GM12878 (cell line): ENCODE measurements at regions of chr9 and their contacts with region 1.

Region 1: DNA sequence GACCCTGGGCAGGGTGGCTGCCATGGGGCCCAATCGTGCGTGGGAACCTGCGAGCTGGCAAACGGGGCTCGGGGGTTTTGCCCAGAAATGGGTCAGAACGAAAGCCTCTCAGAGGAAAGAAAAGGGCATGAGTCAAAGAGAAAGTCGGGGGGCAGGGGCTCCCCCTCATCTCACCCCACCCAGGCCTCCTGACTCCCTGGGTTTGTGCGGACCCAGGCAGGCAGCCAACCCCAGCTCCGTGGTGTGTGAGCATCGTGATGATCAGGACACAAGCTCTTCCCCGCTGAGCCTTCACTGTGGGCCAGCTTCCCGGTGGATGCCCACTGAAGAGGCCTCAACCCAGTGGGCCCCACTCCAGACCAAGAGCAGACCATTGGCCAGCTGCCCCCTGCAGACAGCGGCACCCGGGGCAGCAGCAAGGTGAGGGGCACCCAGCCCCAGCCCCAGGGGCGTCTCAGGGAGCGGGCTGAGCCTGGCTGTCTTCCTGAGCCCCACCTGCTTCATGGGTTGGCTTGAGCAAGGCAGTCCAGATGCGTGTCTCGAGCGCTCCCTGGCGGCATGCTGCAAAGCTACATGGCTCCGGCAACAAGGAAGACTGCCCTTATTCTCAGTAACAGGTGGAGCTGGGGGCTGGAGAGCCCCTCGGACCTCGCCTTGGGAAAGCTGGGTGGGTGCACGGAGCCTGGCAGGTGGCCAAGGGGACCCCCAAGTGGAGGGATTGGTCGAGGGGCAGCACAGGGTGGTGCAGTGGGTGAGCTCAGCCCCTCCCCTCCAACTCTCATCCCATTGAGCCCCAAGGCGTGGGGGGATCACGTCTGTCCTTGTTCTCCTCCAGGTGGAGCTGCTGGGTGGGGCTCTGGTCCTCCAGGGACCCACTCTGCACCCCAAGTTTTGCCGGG is 3.2 kb upstream of the FUT7 start:
- DNase-seq: peak; percentile 55
- ATAC-seq: peak; percentile 89
- H3K4me3 ChIP-seq: peak overlapping the region; percentile 36; the same call in 1 of the 2 replicates
- H3K27ac ChIP-seq: no peak overlapping the region; the same call in 1 of the 2 replicates
- H3K4me1 ChIP-seq: peaks cover 34% of the 10 kb centered on the region
- H3K27me3 ChIP-seq: no peaks in the 10 kb centered on the region
- CTCF ChIP-seq: peak; percentile 90 to 97 (median 97)
- EP300 ChIP-seq: no peak; a peak in 1 of 4 replicates
- POLR2A ChIP-seq: no peak
- RAD21 ChIP-seq: peak; percentile 95

Region 2: GRCh38 chr9:136784249-136784996 is 250.7 kb before region 1 on chr9:
- CTCF ChIA-PET with region 1: interaction called, 61 read pairs
- POLR2A ChIA-PET with region 1: interaction called, 3 read pairs
- RAD21 ChIA-PET with region 1: interaction called, 28 read pairs
- SMC1A ChIA-PET with region 1: interaction called, 20 read pairs
- in situ Hi-C with region 1: no loop called
- intact Hi-C with region 1: loop called (anchors 1 kb)
- DNase-seq: no peak
- ATAC-seq: peak; percentile 65
- H3K4me3 ChIP-seq: no peak overlapping the region
- H3K27ac ChIP-seq: no peak overlapping the region
- H3K4me1 ChIP-seq: peaks cover 3% of the 10 kb centered on the region
- H3K27me3 ChIP-seq: peaks cover 0 to 1% of the 10 kb centered on the region in 2 experiments; a peak in 1 of 4 replicates
- CTCF ChIP-seq: peak; percentile 22 to 32 (median 27); a peak in 3 of 6 replicates
- EP300 ChIP-seq: no peak
- POLR2A ChIP-seq: no peak
- RAD21 ChIP-seq: 0 out of 2 replicates have a peak, but pooled peaks have one; percentile 8

Region 3: GRCh38 chr9:136807281-136808074 is 227.6 kb before region 1 on chr9 and contains the start of gene RABL6:
- CTCF ChIA-PET with region 1: interaction called, 15 read pairs
- POLR2A ChIA-PET with region 1: no interaction called
- RAD21 ChIA-PET with region 1: interaction called, 4 read pairs
- SMC1A ChIA-PET with region 1: interaction called, 5 read pairs
- in situ Hi-C with region 1: no loop called
- intact Hi-C with region 1: no loop called
- DNase-seq: no peak
- ATAC-seq: peak; percentile 87
- H3K4me3 ChIP-seq: peak within 1 kb of the TSS; percentile 90
- H3K27ac ChIP-seq: peak within 1 kb of the TSS; percentile 80
- H3K4me1 ChIP-seq: peaks cover 7% of the 10 kb centered on the region
- H3K27me3 ChIP-seq: no peaks in the 10 kb centered on the region
- CTCF ChIP-seq: no peak
- EP300 ChIP-seq: no peak
- POLR2A ChIP-seq: peak; percentile 78
- RAD21 ChIP-seq: no peak
- polyA plus RNA-seq, gene RABL6: 1.4 to 5.4 TPM

Region 4: GRCh38 chr9:136885950-136886578 is 149.0 kb before region 1 on chr9 and contains the start of gene TRAF2:
- CTCF ChIA-PET with region 1: interaction called, 11 read pairs
- POLR2A ChIA-PET with region 1: no interaction called
- RAD21 ChIA-PET with region 1: interaction called, 4 read pairs
- SMC1A ChIA-PET with region 1: no interaction called
- in situ Hi-C with region 1: no loop called
- intact Hi-C with region 1: no loop called
- DNase-seq: peak; percentile 98
- ATAC-seq: peak; percentile 92
- H3K4me3 ChIP-seq: peak within 1 kb of the TSS; percentile 100
- H3K27ac ChIP-seq: peak within 1 kb of the TSS; percentile 98
- H3K4me1 ChIP-seq: peaks cover 33% of the 10 kb centered on the region
- H3K27me3 ChIP-seq: no peaks in the 10 kb centered on the region
- CTCF ChIP-seq: 0 out of 6 replicates have a peak, but pooled peaks of 1 of the 3 experiments have one; percentile 3
- EP300 ChIP-seq: no peak
- POLR2A ChIP-seq: peak; percentile 90
- RAD21 ChIP-seq: no peak
- polyA plus RNA-seq, gene TRAF2: 0.34 to 1.1 TPM

Region 5: GRCh38 chr9:136975644-136976043 is 59.5 kb before region 1 on chr9:
- CTCF ChIA-PET with region 1: interaction called, 11 read pairs
- POLR2A ChIA-PET with region 1: no interaction called
- RAD21 ChIA-PET with region 1: interaction called, 7 read pairs
- SMC1A ChIA-PET with region 1: no interaction called
- in situ Hi-C with region 1: no loop called
- intact Hi-C with region 1: no loop called
- DNase-seq: no peak
- ATAC-seq: peak; percentile 25
- H3K4me3 ChIP-seq: no peak overlapping the region
- H3K27ac ChIP-seq: no peak overlapping the region
- H3K4me1 ChIP-seq: no peaks in the 10 kb centered on the region
- H3K27me3 ChIP-seq: no peaks in the 10 kb centered on the region; a peak in 2 of 4 replicates
- CTCF ChIP-seq: peak in 2 of 3 experiments; percentile 7 to 17; a peak in 1 of 6 replicates
- EP300 ChIP-seq: no peak
- POLR2A ChIP-seq: no peak
- RAD21 ChIP-seq: 0 out of 2 replicates have a peak, but pooled peaks have one; percentile 26

Region 6: DNA sequence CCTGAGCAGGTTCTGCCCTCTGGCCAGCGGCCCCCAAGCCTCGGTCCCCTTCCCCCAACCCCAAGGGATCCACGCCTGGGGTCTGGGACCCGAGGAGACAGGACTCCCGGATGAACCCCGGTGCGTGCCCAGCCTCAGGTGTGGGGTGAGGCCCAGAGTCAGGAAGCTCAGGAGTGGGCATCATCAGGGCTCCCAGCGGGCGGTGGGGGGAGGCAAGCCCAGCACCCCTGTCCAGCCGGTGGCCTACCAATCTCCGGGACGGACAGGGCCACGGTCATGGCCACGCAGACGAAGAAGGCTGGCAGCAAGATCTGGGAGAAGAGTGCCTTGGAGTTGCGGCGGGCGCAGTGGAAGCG is 21.5 kb before region 1 on chr9:
- CTCF ChIA-PET with region 1: no interaction called
- POLR2A ChIA-PET with region 1: no interaction called
- RAD21 ChIA-PET with region 1: no interaction called
- SMC1A ChIA-PET with region 1: no interaction called
- in situ Hi-C with region 1: no loop called
- intact Hi-C with region 1: no loop called
- DNase-seq: no peak
- ATAC-seq: no peak
- H3K4me3 ChIP-seq: no peak overlapping the region
- H3K27ac ChIP-seq: no peak overlapping the region
- H3K4me1 ChIP-seq: no peaks in the 10 kb centered on the region
- H3K27me3 ChIP-seq: no peaks in the 10 kb centered on the region
- CTCF ChIP-seq: no peak
- EP300 ChIP-seq: no peak
- POLR2A ChIP-seq: no peak
- RAD21 ChIP-seq: no peak

Region 7: DNA sequence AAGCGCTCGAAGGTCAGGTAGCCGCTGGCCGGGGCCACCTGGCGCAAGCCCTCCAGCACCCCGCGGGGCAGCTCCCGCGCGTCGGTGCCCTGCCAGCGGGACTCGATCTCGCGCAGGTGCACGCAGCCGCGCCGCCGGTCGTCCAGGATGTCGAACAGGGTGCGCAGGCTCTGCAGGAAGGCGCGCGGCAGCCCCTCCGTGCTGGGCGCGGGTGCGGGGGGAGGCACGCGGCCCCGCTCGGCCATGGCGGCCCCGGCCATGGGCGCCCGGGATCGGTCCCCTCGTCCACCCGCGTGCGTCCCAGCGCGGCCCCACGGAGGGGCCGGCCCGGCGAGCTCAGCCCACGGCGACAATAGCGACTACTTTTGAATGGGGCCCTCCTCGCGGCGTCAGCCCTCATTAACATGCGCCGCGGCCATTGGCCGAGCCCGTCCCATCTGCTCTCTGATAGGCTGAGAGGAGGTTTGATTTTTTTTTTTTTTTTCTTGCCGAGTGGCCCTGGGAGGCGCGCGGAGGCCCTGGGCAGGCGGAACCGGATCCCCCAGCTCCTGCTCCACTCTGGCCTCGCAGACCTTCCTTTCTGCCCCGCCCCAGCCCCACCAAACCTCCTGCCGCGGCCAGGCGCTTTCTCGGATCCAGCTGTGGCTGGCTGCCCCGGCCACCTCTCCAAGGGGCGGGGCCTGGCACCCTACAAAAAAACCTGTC is 35.2 kb after region 1 on chr9 and contains the start of gene SAPCD2:
- CTCF ChIA-PET with region 1: interaction called, 46 read pairs
- POLR2A ChIA-PET with region 1: interaction called, 5 read pairs
- RAD21 ChIA-PET with region 1: interaction called, 15 read pairs
- SMC1A ChIA-PET with region 1: interaction called, 12 read pairs
- in situ Hi-C with region 1: no loop called
- intact Hi-C with region 1: no loop called
- DNase-seq: no peak
- ATAC-seq: peak; percentile 88
- H3K4me3 ChIP-seq: peak within 1 kb of the TSS; percentile 80
- H3K27ac ChIP-seq: peak within 1 kb of the TSS; percentile 70
- H3K4me1 ChIP-seq: peaks cover 33% of the 10 kb centered on the region
- H3K27me3 ChIP-seq: no peaks in the 10 kb centered on the region
- CTCF ChIP-seq: no peak
- EP300 ChIP-seq: no peak
- POLR2A ChIP-seq: peak; percentile 69
- RAD21 ChIP-seq: no peak
- polyA plus RNA-seq, gene SAPCD2: 1.6 to 2.0 TPM

Region 8: DNA sequence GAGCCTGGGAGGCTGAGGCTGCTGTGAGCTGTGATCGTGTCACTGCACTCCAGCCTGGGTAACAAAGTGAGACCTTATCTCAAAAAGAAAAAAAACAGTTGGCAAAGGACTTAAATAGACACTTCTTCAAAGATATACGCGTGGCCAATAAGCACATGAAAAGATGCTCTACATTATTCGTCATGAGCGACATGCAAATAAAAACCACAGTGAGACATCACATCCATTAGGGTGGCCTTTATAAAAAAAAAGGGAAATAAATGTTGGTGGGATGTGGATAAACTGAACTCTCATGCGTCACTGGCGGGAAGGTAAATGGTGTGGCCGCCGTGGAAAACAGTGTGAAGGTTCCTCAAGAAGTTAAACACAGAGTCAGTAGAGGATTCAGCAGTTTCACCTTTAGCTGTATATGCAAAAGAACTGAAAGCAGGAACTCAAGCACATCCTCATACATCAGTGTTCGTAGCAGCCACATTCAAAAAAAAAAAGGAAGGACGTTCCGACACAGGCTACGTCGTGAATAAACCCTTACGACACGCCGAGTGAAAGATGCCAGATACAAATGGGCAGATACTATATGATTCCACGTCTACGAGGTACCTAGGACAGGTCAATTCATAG is 291.4 kb after region 1 on chr9:
- CTCF ChIA-PET with region 1: no interaction called
- POLR2A ChIA-PET with region 1: no interaction called
- RAD21 ChIA-PET with region 1: no interaction called
- SMC1A ChIA-PET with region 1: no interaction called
- in situ Hi-C with region 1: no loop called
- intact Hi-C with region 1: no loop called
- DNase-seq: peak; percentile 51
- ATAC-seq: peak; percentile 66
- H3K4me3 ChIP-seq: no peak overlapping the region
- H3K27ac ChIP-seq: no peak overlapping the region
- H3K4me1 ChIP-seq: peaks cover 6% of the 10 kb centered on the region; the same call in 1 of the 2 replicates
- H3K27me3 ChIP-seq: no peaks in the 10 kb centered on the region
- CTCF ChIP-seq: no peak
- EP300 ChIP-seq: no peak
- POLR2A ChIP-seq: no peak
- RAD21 ChIP-seq: no peak